ENCODE measurements at regions of chr10 and their contacts with region 1.

Region 1: GRCh38 chr10:80205478-80206276 is at the start of gene ANXA11:
- DNase-seq: peak; percentile 87 to 92 (median 89)
- ATAC-seq: peak; percentile 49 to 82 (median 78)
- H3K4me3 ChIP-seq: peak within 1 kb of the TSS; percentile 72 to 99 (median 93)
- H3K27ac ChIP-seq: peak within 1 kb of the TSS; percentile 96 to 100 (median 99)
- H3K4me1 ChIP-seq: peaks cover 26 to 63% (median 45%) of the 10 kb centered on the region in 12 donors
- H3K27me3 ChIP-seq: no peaks in the 10 kb centered on the region
- CTCF ChIP-seq: no peak
- POLR2A ChIP-seq: peak; percentile 74 to 96
- total RNA-seq, gene ANXA11: 281 to 440 (median 368) TPM

Region 2: GRCh38 chr10:79331709-79332108 is 874.0 kb before region 1 on chr10:
- intact Hi-C with region 1: no loop called
- DNase-seq: peak; percentile 54 to 69 (median 65)
- ATAC-seq: peak; percentile 43 to 76 (median 68)
- H3K4me3 ChIP-seq: no peak overlapping the region
- H3K27ac ChIP-seq: peak overlapping the region in 1 of 12 donors; percentile 15
- H3K4me1 ChIP-seq: peaks cover 0 to 10% (median 0%) of the 10 kb centered on the region in 12 donors
- H3K27me3 ChIP-seq: no peaks in the 10 kb centered on the region
- CTCF ChIP-seq: no peak
- POLR2A ChIP-seq: no peak

Region 3: GRCh38 chr10:80078448-80079311 is 127.0 kb before region 1 on chr10 and contains the start of gene TMEM254:
- intact Hi-C with region 1: loop called in 5 of 10 experiments (anchors 5 to 10 kb)
- DNase-seq: peak; percentile 93 to 96 (median 94)
- ATAC-seq: peak; percentile 97 to 98 (median 98)
- H3K4me3 ChIP-seq: peak within 1 kb of the TSS; percentile 56 to 90 (median 74)
- H3K27ac ChIP-seq: peak within 1 kb of the TSS; percentile 92 to 99 (median 95)
- H3K4me1 ChIP-seq: peaks cover 0 to 20% (median 14%) of the 10 kb centered on the region in 12 donors
- H3K27me3 ChIP-seq: no peaks in the 10 kb centered on the region
- CTCF ChIP-seq: no peak
- POLR2A ChIP-seq: no peak
- total RNA-seq, gene TMEM254: 4.7 to 13.4 (median 7.0) TPM

Region 4: DNA sequence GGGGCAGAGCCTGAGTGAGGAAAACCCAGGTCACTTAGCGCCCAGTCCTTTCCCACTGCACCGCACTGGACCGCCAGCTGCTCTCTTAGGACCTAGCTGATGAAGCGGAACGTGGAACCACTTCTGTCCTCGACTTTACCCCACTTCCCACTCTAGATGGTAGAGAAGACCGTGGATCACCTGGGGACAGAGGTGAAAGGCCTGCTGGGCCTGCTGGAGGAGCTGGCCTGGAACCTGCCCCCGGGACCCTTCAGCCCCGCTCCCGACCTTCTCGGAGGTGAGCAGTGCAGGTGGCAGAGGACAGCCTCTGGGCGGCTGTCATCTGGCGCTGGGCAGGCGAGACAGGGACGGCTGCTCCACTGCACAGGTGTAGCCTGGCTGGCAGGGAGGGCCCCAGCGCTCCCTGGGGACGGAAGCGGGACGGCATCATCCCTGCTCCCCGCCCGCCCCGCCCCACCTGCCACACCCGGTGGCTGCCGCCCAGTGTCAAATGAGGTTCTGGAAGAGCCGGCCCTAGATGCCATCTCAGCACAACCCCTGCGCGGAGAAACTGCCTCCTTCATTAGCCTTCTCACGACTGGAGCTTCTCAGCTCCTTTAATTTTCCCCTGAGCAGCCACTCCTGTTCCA is 61.5 kb before region 1 on chr10:
- intact Hi-C with region 1: loop called in 2 of 10 experiments (anchors 5 kb)
- DNase-seq: no peak
- ATAC-seq: peak; percentile 21 to 58 (median 48)
- H3K4me3 ChIP-seq: peak overlapping the region in 4 of 12 donors; percentile 0 to 31 (median 12)
- H3K27ac ChIP-seq: peak overlapping the region in 3 of 12 donors; percentile 3 to 45 (median 37)
- H3K4me1 ChIP-seq: peaks cover 0 to 31% (median 15%) of the 10 kb centered on the region in 12 donors
- H3K27me3 ChIP-seq: no peaks in the 10 kb centered on the region
- CTCF ChIP-seq: peak in 2 of 12 donors; percentile 4
- POLR2A ChIP-seq: peak in 1 of 2 donors; percentile 12

Region 5: DNA sequence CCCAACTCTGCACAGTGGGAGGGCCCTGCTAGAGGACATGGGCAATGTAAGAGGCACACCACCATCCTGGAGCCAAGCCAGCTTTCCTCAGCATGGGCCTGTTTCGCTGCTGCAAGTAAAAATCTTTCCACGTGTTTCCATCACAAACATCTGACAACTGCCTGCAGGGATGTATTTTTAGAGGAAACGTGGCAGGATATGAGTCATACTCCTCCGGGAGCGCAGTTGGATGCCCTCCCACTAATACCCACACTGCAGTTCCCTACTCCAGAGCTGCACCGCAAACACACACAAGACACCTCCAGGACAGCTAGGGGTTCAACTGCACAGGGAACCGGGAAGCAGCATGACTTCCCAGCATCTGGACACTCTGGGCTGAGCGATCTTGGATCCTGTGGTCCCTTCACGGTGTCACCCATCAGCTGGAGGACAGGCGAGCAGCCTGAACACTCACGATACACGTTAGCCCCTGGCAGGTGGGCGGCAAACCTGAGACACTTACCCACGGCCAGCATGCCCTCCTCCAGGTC is 47.0 kb before region 1 on chr10:
- intact Hi-C with region 1: loop called (anchors 1 to 5 kb)
- DNase-seq: peak; percentile 89 to 96 (median 92)
- ATAC-seq: peak; percentile 80 to 96 (median 92)
- H3K4me3 ChIP-seq: peak overlapping the region in 1 of 12 donors; percentile 18
- H3K27ac ChIP-seq: peak overlapping the region in 11 of 12 donors; percentile 65 to 91 (median 84)
- H3K4me1 ChIP-seq: peaks cover 12 to 66% (median 39%) of the 10 kb centered on the region in 12 donors
- H3K27me3 ChIP-seq: no peaks in the 10 kb centered on the region
- CTCF ChIP-seq: no peak
- POLR2A ChIP-seq: peak in 1 of 2 donors; percentile 19

Region 6: DNA sequence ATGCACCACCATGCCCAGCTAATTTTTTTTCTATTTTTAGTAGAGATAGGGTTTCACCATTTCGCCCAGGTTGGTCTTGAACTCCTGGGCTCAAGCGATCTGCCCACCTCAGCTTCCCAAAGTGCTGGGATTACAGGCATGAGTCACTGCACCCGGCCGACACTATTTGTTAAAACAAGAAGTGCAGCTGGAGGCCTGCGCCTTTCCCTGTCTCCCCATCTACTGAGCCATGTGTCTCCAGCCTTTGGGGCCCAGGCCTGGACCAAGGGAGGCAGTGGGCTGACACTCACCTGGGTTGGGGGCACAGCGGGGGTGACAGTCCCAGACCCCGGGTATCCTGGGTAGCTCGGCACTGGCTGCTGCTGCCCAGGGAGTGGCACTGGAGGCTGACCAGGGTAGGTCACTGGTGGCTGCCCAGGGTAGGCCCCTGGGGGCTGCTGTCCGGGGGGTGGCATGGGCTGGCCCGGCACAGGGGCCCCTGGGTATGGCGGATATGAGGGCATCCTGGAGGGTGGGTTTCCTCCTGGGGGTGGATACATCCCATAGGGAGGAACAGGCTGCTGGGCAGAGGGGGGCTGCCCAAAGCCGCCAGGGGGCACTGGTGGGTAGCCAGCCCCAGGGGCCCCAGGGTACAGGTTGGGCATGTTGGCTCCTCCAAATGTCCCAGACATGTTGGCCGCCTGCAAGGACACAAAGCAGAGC is 36.8 kb before region 1 on chr10:
- intact Hi-C with region 1: loop called in 3 of 10 experiments (anchors 2 to 5 kb)
- DNase-seq: peak in 1 of 5 donors; percentile 27
- ATAC-seq: peak in 3 of 4 donors; percentile 4 to 7 (median 7)
- H3K4me3 ChIP-seq: no peak overlapping the region
- H3K27ac ChIP-seq: peak overlapping the region in 9 of 12 donors; percentile 15 to 79 (median 68)
- H3K4me1 ChIP-seq: peaks cover 15 to 99% (median 72%) of the 10 kb centered on the region in 12 donors
- H3K27me3 ChIP-seq: no peaks in the 10 kb centered on the region
- CTCF ChIP-seq: peak in 7 of 12 donors; percentile 11 to 35 (median 25)
- POLR2A ChIP-seq: no peak

Region 7: GRCh38 chr10:80453701-80454513 is 248.2 kb after region 1 on chr10 and contains the start of gene TSPAN14:
- intact Hi-C with region 1: no loop called
- DNase-seq: peak; percentile 88 to 93 (median 91)
- ATAC-seq: peak; percentile 82 to 92 (median 90)
- H3K4me3 ChIP-seq: peak within 1 kb of the TSS; percentile 64 to 100 (median 95)
- H3K27ac ChIP-seq: peak within 1 kb of the TSS; percentile 93 to 100 (median 99)
- H3K4me1 ChIP-seq: peaks cover 3 to 77% (median 36%) of the 10 kb centered on the region in 12 donors
- H3K27me3 ChIP-seq: no peaks in the 10 kb centered on the region
- CTCF ChIP-seq: peak in 1 of 12 donors; percentile 7
- POLR2A ChIP-seq: peak in 1 of 2 donors; percentile 67
- total RNA-seq, gene TSPAN14: 24.6 to 71.5 (median 39.6) TPM

Measured in heart left ventricle (tissue), 16 donors.